ENCODE measurements at regions of chr14 and their contacts with region 1.

Region 1: GRCh38 chr14:37237735-37238200 is 40.0 kb downstream of the MIPOL1 start:
- DNase-seq: no peak
- H3K4me3 ChIP-seq: no peak overlapping the region
- H3K27ac ChIP-seq: no peak overlapping the region
- H3K4me1 ChIP-seq: no peaks in the 10 kb centered on the region
- H3K27me3 ChIP-seq: no peaks in the 10 kb centered on the region
- CTCF ChIP-seq: no peak

Region 2: DNA sequence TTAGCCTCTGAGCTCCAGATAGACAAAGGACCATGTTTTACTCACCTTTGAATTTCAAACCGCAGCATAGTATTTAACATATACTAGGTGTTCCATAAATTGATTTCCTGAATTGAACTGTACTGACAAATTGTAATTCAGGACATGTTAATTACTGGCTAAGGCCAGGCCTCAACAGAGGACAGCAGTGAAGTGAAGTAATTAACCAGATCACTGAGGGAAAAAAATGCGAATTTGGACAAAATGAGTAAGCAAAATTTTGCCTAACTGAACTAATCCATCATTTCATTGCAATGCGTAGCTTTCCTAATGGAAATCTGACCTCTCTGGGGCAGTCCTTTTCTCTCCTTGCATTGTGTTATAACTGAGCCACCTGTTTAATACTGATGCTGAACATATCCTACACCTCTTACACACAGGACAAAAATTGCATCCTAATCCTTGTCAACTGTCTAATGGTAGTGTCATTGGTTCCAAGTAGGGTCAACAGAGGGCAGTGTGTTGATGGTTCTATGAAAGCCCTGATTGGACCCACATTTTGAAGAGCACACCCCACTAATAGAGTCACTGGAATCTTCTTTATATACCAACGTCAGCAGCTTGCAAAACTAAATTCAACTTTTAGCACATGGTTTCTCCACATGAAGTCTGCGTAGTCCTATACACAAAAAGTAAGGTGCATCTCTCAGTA is 213.7 kb before region 1 on chr14:
- intact Hi-C with region 1: no loop called
- DNase-seq: no peak
- H3K4me3 ChIP-seq: no peak overlapping the region
- H3K27ac ChIP-seq: no peak overlapping the region
- H3K4me1 ChIP-seq: peaks cover 0 to 14% (median 5%) of the 10 kb centered on the region in 4 donors
- H3K27me3 ChIP-seq: no peaks in the 10 kb centered on the region
- CTCF ChIP-seq: no peak

Region 3: GRCh38 chr14:37210448-37210847 is 27.3 kb before region 1 on chr14:
- intact Hi-C with region 1: loop called (anchors 2 kb)
- DNase-seq: no peak
- H3K4me3 ChIP-seq: no peak overlapping the region
- H3K27ac ChIP-seq: no peak overlapping the region
- H3K4me1 ChIP-seq: no peaks in the 10 kb centered on the region
- H3K27me3 ChIP-seq: no peaks in the 10 kb centered on the region
- CTCF ChIP-seq: no peak